ENCODE measurements at regions of chr10 and their contacts with region 1.

Region 1: DNA sequence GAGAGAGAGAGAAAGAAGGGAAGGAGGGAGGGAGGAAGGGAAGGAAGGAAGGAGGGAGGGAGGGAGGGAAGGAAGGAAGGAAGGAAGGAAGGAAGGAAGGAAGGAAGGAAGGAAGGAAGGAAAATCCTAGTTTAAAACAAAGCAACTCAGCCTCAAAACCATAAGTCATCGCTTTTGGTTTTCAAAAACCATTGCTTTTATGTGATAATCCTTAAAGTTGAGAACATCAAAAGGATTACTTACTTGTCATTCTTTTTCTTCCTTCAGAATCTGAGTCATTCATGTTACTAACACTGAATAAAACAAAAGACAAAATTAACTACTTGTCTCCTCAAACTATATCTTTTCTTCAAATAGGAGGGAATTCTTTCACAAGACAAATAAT is 21.6 kb upstream of the PDSS1 start:
- DNase-seq: no peak
- ATAC-seq: no peak
- H3K4me3 Mint-ChIP-seq: no peak overlapping the region
- H3K27ac Mint-ChIP-seq: no peak overlapping the region
- H3K4me1 Mint-ChIP-seq: no peaks in the 10 kb centered on the region
- H3K27me3 Mint-ChIP-seq: no peaks in the 10 kb centered on the region
- CTCF ChIP-seq: no peak

Region 2: GRCh38 chr10:25294019-25294926 is 1381.6 kb before region 1 on chr10:
- CTCF ChIA-PET with region 1: no interaction called
- POLR2A ChIA-PET with region 1: interaction called, 10 read pairs
- DNase-seq: no peak
- ATAC-seq: no peak
- H3K4me3 Mint-ChIP-seq: no peak overlapping the region
- H3K27ac Mint-ChIP-seq: no peak overlapping the region
- H3K4me1 Mint-ChIP-seq: peaks cover under 1% of the 10 kb centered on the region
- H3K27me3 Mint-ChIP-seq: no peaks in the 10 kb centered on the region
- CTCF ChIP-seq: no peak

Measured in WTC11 (cell line).